Activated T-helper 2 cell treated with anti-CD3 and anti-CD28 coated beads, Interferon-gamma antibody, Interleukin-2, Interleukin-4, amounts not matched to agents 10 μg/mL and 5 μg/mL and 100 μg/mL, durations not matched to agents 14 hours and 24 hours and 36 hours (primary cell): ENCODE measurements at regions of chr16 and their contacts with region 1.

Region 1: DNA sequence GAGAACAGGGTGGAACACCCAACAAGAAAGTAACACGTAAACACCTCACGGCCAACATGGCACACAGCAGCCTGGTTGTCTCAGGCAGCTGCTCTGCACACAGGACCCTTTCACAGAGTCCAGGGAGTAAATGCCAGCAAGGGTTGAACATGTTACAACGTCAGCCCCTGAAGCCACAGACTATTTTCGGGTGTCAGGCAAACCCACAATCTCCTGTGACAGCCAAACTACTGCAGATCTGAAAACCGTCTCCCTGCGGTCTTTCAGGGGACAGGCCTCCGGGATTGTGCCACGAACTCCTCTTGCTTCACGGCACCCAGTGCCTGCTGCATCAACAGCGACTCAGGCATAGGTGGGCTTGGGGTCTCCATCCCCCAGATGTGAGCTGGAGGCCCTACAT is 127.7 kb downstream of the XYLT1 start:
- DNase-seq: peak; percentile 59
- H3K4me3 Mint-ChIP-seq: peak overlapping the region; percentile 69
- H3K27ac Mint-ChIP-seq: peak overlapping the region; percentile 93
- H3K4me1 Mint-ChIP-seq: peaks cover 67% of the 10 kb centered on the region
- H3K27me3 Mint-ChIP-seq: no peaks in the 10 kb centered on the region

Region 2: GRCh38 chr16:17273142-17273561 is 69.9 kb before region 1 on chr16:
- intact Hi-C with region 1: loop called (anchors 2 kb)
- DNase-seq: peak; percentile 31
- H3K4me3 Mint-ChIP-seq: no peak overlapping the region
- H3K27ac Mint-ChIP-seq: no peak overlapping the region
- H3K4me1 Mint-ChIP-seq: peaks cover 58% of the 10 kb centered on the region
- H3K27me3 Mint-ChIP-seq: peaks cover 7% of the 10 kb centered on the region

Region 3: GRCh38 chr16:17301593-17302135 is 41.4 kb before region 1 on chr16:
- intact Hi-C with region 1: no loop called
- DNase-seq: no peak
- H3K4me3 Mint-ChIP-seq: no peak overlapping the region
- H3K27ac Mint-ChIP-seq: no peak overlapping the region
- H3K4me1 Mint-ChIP-seq: peaks cover 40% of the 10 kb centered on the region
- H3K27me3 Mint-ChIP-seq: no peaks in the 10 kb centered on the region

Region 4: DNA sequence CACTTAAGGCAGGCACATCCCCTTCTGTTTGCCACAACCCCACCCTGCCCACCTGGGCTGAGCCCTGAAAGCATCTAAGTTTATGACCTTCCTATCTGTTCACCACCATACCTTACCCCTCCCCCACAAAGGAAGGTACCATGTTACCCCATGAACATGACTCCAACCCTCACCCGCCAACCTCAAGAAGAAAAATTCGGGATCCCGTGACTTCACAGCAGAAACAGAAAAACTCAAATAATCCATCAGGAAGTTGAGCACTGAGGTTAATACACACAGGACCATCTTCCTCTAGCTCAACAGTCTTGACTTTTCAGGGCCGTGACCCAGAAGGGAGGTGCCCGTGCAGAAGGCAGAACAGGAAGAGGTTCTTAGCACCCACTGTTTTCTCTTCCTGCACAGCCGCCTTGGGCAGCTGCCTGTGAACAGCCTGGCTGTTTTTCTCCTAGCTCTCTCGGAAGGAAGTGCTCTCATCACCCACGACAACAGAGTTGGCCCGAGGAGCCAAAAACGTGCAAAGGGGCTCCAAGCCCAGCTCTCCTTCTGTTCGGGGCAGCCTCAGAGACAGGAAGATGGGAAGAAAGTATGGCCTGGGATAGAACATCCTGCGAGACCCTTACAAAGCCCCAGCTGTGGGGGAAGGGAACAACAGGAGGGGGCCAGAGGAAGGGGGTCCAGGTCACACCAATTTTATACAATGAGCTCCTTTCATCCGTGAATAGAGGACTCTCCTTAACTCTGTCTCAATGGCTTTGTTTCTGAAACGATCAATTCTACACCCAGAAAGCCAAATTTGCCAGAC is 26.6 kb after region 1 on chr16:
- intact Hi-C with region 1: loop called (anchors 1 kb)
- DNase-seq: peak; percentile 76
- H3K4me3 Mint-ChIP-seq: peak overlapping the region; percentile 83
- H3K27ac Mint-ChIP-seq: peak overlapping the region; percentile 99
- H3K4me1 Mint-ChIP-seq: peaks cover 83% of the 10 kb centered on the region
- H3K27me3 Mint-ChIP-seq: no peaks in the 10 kb centered on the region

Region 5: DNA sequence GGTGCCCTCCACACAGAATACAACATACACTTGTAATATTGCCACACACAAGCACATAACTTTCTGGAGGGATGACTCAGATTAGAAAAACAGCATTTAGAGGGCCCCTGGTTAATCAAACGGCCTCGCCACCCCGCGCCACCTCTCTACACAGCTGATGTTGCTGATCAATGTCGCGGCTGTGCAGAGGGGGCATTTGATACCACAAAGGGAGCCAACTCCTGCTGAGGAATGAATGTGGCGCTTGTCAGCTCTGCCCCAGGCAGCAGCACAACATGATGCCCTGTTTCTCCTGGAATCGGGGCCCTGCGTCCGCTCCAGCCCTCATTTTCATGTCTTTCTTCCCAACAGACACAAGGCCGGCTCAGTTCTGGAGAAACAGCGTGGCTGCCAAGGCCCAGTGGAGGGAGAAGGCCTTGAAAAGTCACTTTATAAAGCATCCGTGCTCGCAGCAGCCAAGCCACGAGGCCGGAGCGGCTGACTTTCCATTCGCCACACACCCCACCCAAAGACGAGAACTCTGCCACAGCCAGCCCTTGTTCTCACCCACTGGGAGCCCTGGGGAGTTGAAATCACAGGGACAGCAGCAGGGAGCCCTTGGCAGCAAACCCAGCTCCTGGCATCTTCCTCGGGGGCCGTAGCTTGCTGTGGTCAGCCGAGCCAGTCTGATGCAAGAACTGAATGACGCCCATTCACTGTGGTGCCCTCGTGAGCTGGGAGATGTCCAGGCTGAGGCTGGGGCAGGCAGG is 62.1 kb after region 1 on chr16:
- intact Hi-C with region 1: no loop called
- DNase-seq: no peak
- H3K4me3 Mint-ChIP-seq: no peak overlapping the region
- H3K27ac Mint-ChIP-seq: no peak overlapping the region
- H3K4me1 Mint-ChIP-seq: peaks cover 8% of the 10 kb centered on the region
- H3K27me3 Mint-ChIP-seq: no peaks in the 10 kb centered on the region

Region 6: DNA sequence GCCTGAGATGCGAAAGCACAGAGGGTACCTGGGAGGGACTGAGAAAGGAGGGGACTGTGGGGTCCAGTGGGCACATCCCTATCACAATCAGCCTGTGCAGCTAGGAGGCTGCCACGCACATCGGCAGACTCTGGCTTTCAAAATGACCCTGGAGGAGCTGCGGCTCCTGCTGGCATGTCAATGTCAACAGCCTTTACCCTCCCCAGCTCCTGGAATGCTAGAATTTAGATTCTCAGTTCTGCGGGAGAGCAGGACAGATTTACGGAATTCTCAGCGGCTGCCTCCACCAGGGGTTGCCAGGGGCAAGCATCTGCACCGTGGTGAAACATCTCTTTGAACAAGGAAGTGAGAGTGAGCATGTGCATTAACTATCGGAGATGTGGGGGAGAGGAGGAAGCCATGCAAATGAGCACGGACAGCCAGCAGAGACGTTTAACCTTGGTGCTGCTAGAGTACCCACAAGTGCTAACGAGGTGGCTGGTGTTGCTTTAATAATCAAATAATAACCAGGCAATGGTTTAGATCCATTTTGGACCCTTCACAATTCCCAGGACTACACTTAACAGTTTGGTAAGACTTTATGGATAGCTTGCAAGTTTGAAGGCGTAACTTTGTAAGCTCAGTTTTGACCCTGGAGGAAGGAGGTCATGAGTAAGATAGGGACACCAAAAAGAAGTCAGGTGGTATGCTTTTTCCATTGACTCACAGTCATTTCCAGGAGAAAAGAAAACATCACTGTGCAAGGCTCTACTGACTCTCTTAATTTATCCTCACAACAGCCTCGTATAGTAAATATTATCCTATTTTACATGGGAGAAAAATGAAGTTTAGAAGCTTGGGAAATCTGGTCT is 73.7 kb after region 1 on chr16:
- intact Hi-C with region 1: loop called (anchors 2 kb)
- DNase-seq: peak; percentile 49
- H3K4me3 Mint-ChIP-seq: peak overlapping the region; percentile 66
- H3K27ac Mint-ChIP-seq: peak overlapping the region; percentile 97
- H3K4me1 Mint-ChIP-seq: peaks cover 41% of the 10 kb centered on the region
- H3K27me3 Mint-ChIP-seq: no peaks in the 10 kb centered on the region